ENCODE measurements at regions of chr3 and their contacts with region 1.

Region 1: GRCh38 chr3:119293871-119294695 is at the start of gene ARHGAP31:
- DNase-seq: peak; percentile 92 to 95 (median 94)
- H3K4me3 ChIP-seq: peak within 1 kb of the TSS; percentile 79 to 85
- H3K4me3 Mint-ChIP-seq: peak within 1 kb of the TSS; percentile 92 to 97 (median 95)
- H3K27ac ChIP-seq: peak within 1 kb of the TSS; percentile 93
- H3K27ac Mint-ChIP-seq: peak within 1 kb of the TSS; percentile 97 to 99 (median 98)
- H3K4me1 ChIP-seq: peaks cover 55% of the 10 kb centered on the region
- H3K4me1 Mint-ChIP-seq: peaks cover 39 to 85% (median 55%) of the 10 kb centered on the region in 4 donors
- H3K27me3 ChIP-seq: no peaks in the 10 kb centered on the region
- H3K27me3 Mint-ChIP-seq: no peaks in the 10 kb centered on the region
- total RNA-seq, gene ARHGAP31: 4.5 to 5.8 TPM

Region 2: DNA sequence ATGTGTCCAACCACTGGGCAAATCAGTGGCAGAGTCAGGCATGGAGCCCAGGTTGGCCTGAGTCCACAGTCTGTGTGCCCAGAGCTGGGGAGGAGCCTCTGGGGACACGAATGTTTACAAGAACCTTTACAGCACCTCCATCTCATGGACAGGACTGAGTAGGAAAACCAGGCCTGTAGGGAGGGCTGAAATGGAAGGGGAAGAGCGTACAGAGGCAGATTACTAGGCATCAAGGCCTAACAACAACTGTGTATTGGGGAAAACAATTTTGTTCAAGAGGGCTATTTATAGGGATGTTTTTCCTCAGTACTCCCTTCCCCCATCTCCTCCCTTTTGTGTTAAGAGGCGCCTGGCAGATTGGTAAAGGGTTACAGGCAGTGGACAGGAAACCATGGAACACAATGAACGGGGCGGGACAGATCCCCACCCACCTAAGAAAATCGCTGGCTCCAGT is 15.0 kb before region 1 on chr3:
- CTCF ChIA-PET with region 1: interaction called, 23 read pairs
- POLR2A ChIA-PET with region 1: interaction called, 4 read pairs
- intact Hi-C with region 1: loop called (anchors 1 kb)
- DNase-seq: no peak
- H3K4me3 ChIP-seq: no peak overlapping the region
- H3K4me3 Mint-ChIP-seq: no peak overlapping the region
- H3K27ac ChIP-seq: no peak overlapping the region
- H3K27ac Mint-ChIP-seq: peak overlapping the region in 1 of 7 donors; percentile 12
- H3K4me1 ChIP-seq: no peaks in the 10 kb centered on the region
- H3K4me1 Mint-ChIP-seq: peaks cover 0 to 4% (median 2%) of the 10 kb centered on the region in 4 donors
- H3K27me3 ChIP-seq: no peaks in the 10 kb centered on the region
- H3K27me3 Mint-ChIP-seq: no peaks in the 10 kb centered on the region

Region 3: GRCh38 chr3:119322835-119323722 is 29.0 kb after region 1 on chr3:
- CTCF ChIA-PET with region 1: interaction called, 17 read pairs
- POLR2A ChIA-PET with region 1: interaction called, 55 read pairs
- intact Hi-C with region 1: loop called (anchors 1 kb)
- DNase-seq: peak; percentile 87 to 95 (median 89)
- H3K4me3 ChIP-seq: peak overlapping the region; percentile 20 to 73
- H3K4me3 Mint-ChIP-seq: peak overlapping the region; percentile 88 to 96 (median 90)
- H3K27ac ChIP-seq: peak overlapping the region; percentile 75
- H3K27ac Mint-ChIP-seq: peak overlapping the region; percentile 93 to 99 (median 97)
- H3K4me1 ChIP-seq: peaks cover 19% of the 10 kb centered on the region
- H3K4me1 Mint-ChIP-seq: peaks cover 13 to 38% (median 27%) of the 10 kb centered on the region in 4 donors
- H3K27me3 ChIP-seq: no peaks in the 10 kb centered on the region
- H3K27me3 Mint-ChIP-seq: no peaks in the 10 kb centered on the region

Region 4: DNA sequence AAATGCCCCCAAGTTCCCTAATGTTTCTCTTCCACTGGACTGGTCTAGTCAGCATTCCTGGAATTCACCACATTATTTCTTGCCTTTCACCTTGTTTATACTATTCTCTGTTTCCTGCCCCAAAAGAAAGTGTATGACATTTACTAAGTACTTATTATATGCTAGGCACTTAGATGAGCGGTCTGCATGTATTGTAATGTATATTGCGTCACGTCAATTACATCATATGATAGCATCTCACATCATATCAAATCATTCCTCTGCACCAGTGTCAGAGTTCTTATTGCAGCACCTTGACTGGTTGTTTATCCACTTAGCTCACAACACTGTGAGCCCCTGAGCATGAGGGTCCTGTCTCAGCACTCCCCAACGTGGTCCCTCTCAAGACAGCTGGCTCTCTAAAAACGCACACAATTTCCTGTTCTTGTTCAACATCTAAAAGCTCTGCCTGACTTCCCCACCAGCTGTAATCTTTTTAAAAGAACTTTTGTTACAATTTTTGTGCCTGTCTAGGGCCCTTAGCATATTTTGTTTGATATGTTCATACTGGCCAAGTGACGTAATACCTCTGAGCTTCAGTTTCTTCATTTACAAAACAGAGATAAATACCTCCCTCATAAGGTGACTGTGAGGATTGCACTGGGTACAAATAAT is 58.9 kb after region 1 on chr3:
- CTCF ChIA-PET with region 1: interaction called, 12 read pairs
- POLR2A ChIA-PET with region 1: interaction called, 20 read pairs
- intact Hi-C with region 1: loop called (anchors 1 kb)
- DNase-seq: peak in 4 of 5 donors; percentile 32 to 49 (median 38)
- H3K4me3 ChIP-seq: no peak overlapping the region
- H3K4me3 Mint-ChIP-seq: peak overlapping the region in 3 of 8 donors; percentile 19 to 46 (median 44)
- H3K27ac ChIP-seq: no peak overlapping the region
- H3K27ac Mint-ChIP-seq: peak overlapping the region in 5 of 7 donors; percentile 8 to 70 (median 42)
- H3K4me1 ChIP-seq: peaks cover 24% of the 10 kb centered on the region
- H3K4me1 Mint-ChIP-seq: peaks cover 25 to 34% (median 27%) of the 10 kb centered on the region in 4 donors
- H3K27me3 ChIP-seq: no peaks in the 10 kb centered on the region
- H3K27me3 Mint-ChIP-seq: no peaks in the 10 kb centered on the region

Region 5: GRCh38 chr3:119463171-119464169 is 169.4 kb after region 1 on chr3 and contains the start of gene TMEM39A:
- CTCF ChIA-PET with region 1: interaction called, 5 read pairs
- POLR2A ChIA-PET with region 1: interaction called, 55 read pairs
- intact Hi-C with region 1: loop called (anchors 1 kb)
- DNase-seq: peak; percentile 98 to 99 (median 99)
- H3K4me3 ChIP-seq: peak within 1 kb of the TSS; percentile 91 to 98
- H3K4me3 Mint-ChIP-seq: peak within 1 kb of the TSS; percentile 93 to 97 (median 95)
- H3K27ac ChIP-seq: peak within 1 kb of the TSS; percentile 91
- H3K27ac Mint-ChIP-seq: peak within 1 kb of the TSS; percentile 98 to 99 (median 99)
- H3K4me1 ChIP-seq: peaks cover 33% of the 10 kb centered on the region
- H3K4me1 Mint-ChIP-seq: peaks cover 24 to 58% (median 38%) of the 10 kb centered on the region in 4 donors
- H3K27me3 ChIP-seq: no peaks in the 10 kb centered on the region
- H3K27me3 Mint-ChIP-seq: peaks cover 0 to 2% of the 10 kb centered on the region in 2 donors
- total RNA-seq, gene TMEM39A: 46.1 to 47.4 TPM

Region 6: GRCh38 chr3:119469381-119470189 is 175.5 kb after region 1 on chr3:
- CTCF ChIA-PET with region 1: interaction called, 5 read pairs
- POLR2A ChIA-PET with region 1: interaction called, 55 read pairs
- intact Hi-C with region 1: loop called (anchors 1 kb)
- DNase-seq: peak in 3 of 5 donors; percentile 5 to 21 (median 15)
- H3K4me3 ChIP-seq: peak overlapping the region; percentile 70 to 84
- H3K4me3 Mint-ChIP-seq: peak overlapping the region; percentile 92 to 98 (median 97)
- H3K27ac ChIP-seq: peak overlapping the region; percentile 92
- H3K27ac Mint-ChIP-seq: peak overlapping the region; percentile 79 to 97 (median 93)
- H3K4me1 ChIP-seq: peaks cover 24% of the 10 kb centered on the region
- H3K4me1 Mint-ChIP-seq: peaks cover 19 to 33% (median 28%) of the 10 kb centered on the region in 4 donors
- H3K27me3 ChIP-seq: no peaks in the 10 kb centered on the region
- H3K27me3 Mint-ChIP-seq: no peaks in the 10 kb centered on the region

Region 7: DNA sequence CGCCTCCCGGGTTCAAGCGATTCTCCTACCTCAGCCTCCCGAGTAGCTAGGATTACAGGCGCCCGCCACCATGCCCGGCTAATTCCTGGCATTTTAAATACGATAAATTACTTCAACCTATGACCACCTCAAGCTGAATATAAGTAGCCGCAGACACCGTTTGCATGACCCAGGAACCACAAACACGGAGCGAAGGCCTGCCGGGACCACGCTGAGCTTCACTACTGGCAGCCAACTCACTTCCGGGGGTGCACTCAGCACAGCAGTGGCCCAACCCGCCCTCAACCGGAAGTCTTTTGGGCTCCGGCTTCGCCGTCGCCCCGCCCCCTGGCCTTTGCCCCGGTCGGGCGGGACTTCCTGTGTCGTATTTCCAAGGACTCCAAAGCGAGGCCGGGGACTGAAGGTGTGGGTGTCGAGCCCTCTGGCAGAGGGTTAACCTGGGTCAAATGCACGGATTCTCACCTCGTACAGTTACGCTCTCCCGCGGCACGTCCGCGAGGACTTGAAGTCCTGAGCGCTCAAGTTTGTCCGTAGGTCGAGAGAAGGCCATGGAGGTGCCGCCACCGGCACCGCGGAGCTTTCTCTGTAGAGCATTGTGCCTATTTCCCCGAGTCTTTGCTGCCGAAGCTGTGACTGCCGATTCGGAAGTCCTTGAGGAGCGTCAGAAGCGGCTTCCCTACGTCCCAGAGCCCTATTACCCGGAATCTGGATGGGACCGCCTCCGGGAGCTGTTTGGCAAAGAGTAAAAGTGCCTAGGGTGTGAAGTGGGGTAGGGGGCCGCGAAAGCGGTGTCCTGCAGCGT is 204.3 kb after region 1 on chr3 and contains the start of gene TIMMDC1:
- CTCF ChIA-PET with region 1: interaction called, 4 read pairs
- POLR2A ChIA-PET with region 1: interaction called, 14 read pairs
- intact Hi-C with region 1: no loop called
- DNase-seq: peak; percentile 96 to 98 (median 97)
- H3K4me3 ChIP-seq: peak within 1 kb of the TSS; percentile 82 to 93
- H3K4me3 Mint-ChIP-seq: peak within 1 kb of the TSS; percentile 98 to 100 (median 99)
- H3K27ac ChIP-seq: peak within 1 kb of the TSS; percentile 92
- H3K27ac Mint-ChIP-seq: peak within 1 kb of the TSS; percentile 99 to 100 (median 100)
- H3K4me1 ChIP-seq: peaks cover 31% of the 10 kb centered on the region
- H3K4me1 Mint-ChIP-seq: peaks cover 13 to 42% (median 33%) of the 10 kb centered on the region in 4 donors
- H3K27me3 ChIP-seq: no peaks in the 10 kb centered on the region
- H3K27me3 Mint-ChIP-seq: no peaks in the 10 kb centered on the region
- total RNA-seq, gene TIMMDC1: 72.3 to 80.9 TPM

Measured in CD4-positive, alpha-beta memory T cell (primary cell).